ENCODE measurements at regions of chr3 and their contacts with region 1.

Region 1: DNA sequence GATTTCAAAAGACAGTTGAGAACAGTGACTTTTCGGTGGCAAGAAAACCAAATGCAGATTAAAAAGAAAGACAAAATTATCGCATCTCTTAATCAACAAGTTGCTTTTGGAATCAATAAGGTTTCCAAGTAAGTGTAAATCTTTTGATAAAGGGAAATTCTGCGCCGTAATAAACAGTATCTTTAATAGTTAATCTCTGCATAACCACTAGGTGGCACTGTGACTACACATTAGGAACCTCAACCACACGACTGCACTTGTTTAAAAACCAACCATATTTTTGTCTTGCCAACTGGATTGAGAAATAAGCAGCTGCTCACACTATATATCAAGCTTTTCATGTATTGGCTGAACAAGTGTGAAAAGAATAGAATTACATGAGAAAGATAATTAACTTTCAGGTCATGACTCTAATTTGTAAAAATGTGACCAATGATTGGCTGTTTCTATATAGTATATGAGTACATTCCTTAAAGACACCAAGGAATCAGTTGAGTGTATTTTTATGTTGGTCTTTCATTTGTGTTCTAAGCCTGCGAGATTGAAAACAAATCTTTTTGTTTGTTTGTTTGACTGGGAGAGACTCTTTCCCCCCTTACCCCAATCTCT is 72.7 kb downstream of the DZIP3 start:
- DNase-seq: peak in 1 of 2 donors; percentile 90
- H3K4me3 ChIP-seq: no peak overlapping the region
- H3K27ac ChIP-seq: no peak overlapping the region
- H3K4me1 ChIP-seq: no peaks in the 10 kb centered on the region
- H3K27me3 ChIP-seq: no peaks in the 10 kb centered on the region
- CTCF ChIP-seq: peak in 5 of 7 experiments; percentile 55 to 86 (median 70)
- EP300 ChIP-seq: no peak
- POLR2A ChIP-seq: no peak

Region 2: DNA sequence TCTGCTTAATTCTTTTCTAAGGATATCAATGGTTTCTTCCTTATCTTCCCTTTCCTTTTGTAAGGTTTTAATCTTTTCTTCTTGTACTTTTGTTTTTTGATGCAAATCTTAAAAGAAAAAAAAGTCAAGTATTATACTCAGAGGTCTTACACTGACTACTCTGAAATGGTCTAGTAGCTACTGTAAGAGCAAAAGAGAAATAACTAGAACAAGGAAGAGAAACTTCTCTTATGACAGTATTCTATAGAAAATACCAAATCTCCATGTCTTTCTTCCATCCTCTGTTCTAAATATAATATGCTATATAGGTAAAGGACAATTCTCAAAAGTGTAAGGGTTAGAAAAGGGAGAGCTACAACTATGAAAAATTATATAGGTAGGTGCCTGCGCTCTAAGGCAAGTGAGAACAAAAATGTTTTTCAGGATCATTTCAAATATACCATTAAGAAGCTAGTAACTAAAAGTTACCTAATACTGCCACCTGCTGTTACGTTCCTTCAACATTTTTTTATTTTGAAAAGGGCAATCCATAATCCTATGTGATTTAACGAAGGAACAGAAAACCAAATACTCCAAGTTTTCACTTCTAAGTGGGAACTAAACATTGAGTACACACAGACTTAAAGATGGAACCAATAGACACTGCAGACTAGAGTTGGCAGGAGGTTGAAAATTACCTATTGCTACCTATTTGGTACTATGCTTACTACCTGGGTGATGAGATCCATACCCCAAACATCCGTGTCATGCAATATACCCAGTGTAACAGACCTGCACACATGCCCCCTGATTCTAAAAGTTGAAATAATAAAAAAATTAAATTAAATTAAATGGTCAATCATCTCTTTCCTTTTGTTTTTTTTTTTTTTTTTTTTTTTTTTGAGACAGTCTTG is 109.7 kb before region 1 on chr3:
- intact Hi-C with region 1: no loop called
- DNase-seq: peak in 1 of 2 donors; percentile 78
- H3K4me3 ChIP-seq: no peak overlapping the region
- H3K27ac ChIP-seq: no peak overlapping the region
- H3K4me1 ChIP-seq: peaks cover 0 to 11% (median 0%) of the 10 kb centered on the region in 4 donors
- H3K27me3 ChIP-seq: no peaks in the 10 kb centered on the region
- CTCF ChIP-seq: peak in 5 of 7 experiments; percentile 24 to 47 (median 38)
- EP300 ChIP-seq: no peak
- POLR2A ChIP-seq: no peak

Region 3: GRCh38 chr3:108728934-108729333 is 66.7 kb after region 1 on chr3:
- intact Hi-C with region 1: no loop called
- DNase-seq: no peak
- H3K4me3 ChIP-seq: no peak overlapping the region
- H3K27ac ChIP-seq: no peak overlapping the region
- H3K4me1 ChIP-seq: no peaks in the 10 kb centered on the region
- H3K27me3 ChIP-seq: no peaks in the 10 kb centered on the region
- CTCF ChIP-seq: no peak
- EP300 ChIP-seq: no peak
- POLR2A ChIP-seq: no peak

Region 4: DNA sequence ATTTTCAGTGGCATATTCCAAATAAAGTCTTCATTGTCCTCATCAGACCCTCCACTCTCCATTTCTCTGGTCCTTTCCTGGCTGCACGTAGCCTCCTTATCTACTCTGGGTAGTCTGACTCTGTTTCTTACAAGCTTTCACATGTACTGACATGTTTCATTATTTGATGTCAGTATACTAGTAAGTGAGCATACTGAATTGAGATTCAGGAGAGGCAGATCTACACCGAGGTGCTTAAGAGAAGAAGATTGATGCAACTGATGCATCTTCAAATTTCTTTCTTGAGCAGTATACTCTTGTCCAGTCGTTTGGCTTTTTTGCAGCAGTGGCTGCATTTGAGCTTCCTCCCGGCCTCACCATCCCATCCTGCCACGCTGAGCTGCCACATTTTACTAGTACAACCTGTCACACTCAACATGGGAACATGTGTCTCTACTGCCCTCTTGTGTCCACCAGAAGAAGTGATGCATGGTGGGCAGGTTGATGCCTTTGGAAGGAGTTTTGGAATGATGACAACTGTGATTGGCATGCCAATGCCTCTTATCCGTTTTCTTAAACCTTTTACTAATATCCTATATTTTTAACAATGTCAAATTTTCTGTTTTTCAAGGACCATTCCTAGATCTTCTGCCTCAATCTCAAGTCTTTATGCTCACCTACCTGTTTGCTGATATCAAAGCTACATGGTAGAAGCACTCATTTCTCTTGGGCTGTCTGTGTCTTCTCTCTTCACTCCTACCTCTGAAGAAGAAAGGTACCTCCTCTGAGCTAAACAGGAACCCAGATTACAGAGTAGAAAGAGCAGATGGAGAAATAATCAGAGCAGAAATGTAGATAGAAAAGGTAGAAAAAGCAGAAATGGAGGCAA is 252.8 kb after region 1 on chr3:
- intact Hi-C with region 1: loop called (anchors 5 kb)
- DNase-seq: peak; percentile 65 to 86
- H3K4me3 ChIP-seq: no peak overlapping the region
- H3K27ac ChIP-seq: no peak overlapping the region
- H3K4me1 ChIP-seq: no peaks in the 10 kb centered on the region
- H3K27me3 ChIP-seq: peaks cover 0 to 6% (median 0%) of the 10 kb centered on the region in 3 donors
- CTCF ChIP-seq: peak in 5 of 7 experiments; percentile 67 to 84 (median 74)
- EP300 ChIP-seq: no peak
- POLR2A ChIP-seq: no peak